Activated CD4-positive, alpha-beta memory T cell treated with anti-CD3 and anti-CD28 coated beads, Interleukin-2, amount 10 ng/mL, durations not matched to agents 7 days and 5 days (primary cell): ENCODE measurements at regions of chr19 and their contacts with region 1.

Region 1: DNA sequence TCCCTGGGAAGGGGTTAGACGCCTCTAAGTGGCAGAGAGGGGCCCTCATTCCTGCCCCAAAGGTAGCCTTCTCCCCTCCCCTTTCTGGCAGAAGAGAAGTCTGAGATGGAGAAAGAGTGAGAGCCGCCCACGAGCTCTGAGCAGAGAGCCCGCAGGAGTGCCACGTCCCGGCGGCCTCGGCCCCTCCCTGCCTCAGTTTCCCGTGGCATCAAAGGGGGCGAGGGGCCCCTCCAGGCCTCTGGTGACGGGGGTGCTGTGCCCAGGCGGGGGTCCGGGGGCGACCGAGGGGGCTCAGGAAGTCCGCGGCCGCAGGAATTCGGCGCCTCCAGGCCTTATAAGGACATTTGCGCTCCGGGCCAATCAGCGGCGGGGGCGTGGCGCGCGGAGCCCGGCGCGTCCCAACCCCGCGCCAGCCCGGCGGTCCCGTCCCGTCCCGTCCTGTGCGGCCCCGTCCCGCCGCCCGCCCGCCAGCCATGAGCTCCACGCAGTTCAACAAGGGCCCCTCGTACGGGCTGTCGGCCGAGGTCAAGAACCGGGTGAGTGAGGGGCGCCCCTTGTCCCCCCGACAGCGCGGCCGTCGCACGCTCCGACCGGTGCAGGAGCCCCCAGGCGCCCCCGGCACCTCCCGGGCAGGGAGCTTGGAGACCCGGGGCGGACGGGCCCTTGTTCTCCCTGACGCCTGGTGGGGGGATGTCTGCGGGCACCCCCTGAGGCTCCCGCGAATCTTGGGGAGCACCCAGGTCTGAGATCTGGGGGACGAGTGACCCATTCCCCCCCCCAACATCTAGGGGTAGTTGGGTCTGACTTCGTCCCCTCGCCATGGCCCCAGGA is at the start of gene CNN2:
- DNase-seq: peak; percentile 78
- H3K4me3 Mint-ChIP-seq: peak within 1 kb of the TSS; percentile 97
- H3K27ac Mint-ChIP-seq: peak within 1 kb of the TSS; percentile 95
- H3K4me1 Mint-ChIP-seq: peaks cover 33% of the 10 kb centered on the region
- H3K27me3 Mint-ChIP-seq: no peaks in the 10 kb centered on the region
- total RNA-seq, gene CNN2: 513 to 519 TPM

Region 2: DNA sequence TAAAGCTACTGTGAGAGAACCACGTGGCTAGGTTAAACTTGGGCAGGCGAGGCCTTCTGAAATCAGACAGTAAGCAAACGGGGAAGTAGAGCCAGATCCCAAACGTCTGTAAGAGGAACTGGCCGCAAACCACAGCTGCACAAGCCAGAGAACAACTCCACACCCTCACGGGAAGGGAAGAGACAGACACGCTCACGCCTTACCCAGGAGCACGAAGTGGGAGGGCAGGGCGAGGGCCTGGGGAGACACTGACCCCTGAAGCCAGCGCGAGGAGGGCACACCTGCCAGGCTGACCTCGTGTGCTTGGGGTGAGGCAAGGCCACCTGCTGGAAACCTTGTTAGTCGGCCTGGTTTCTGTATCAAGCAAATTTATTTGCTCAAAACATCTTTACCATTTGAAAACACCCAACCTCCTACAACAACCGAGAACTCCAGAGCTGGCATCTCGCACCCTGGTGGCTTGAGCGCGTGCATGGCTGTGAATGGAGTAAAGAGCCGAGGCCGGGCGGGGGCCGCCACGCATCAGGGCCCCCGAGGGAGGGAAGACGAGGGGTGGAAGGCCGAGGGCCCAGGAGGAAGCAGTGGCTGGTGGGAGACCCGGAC is 61.5 kb after region 1 on chr19:
- CTCF ChIA-PET with region 1: no interaction called
- POLR2A ChIA-PET with region 1: interaction called, 50 read pairs
- DNase-seq: peak; percentile 54
- H3K4me3 Mint-ChIP-seq: peak overlapping the region; percentile 20
- H3K27ac Mint-ChIP-seq: peak overlapping the region; percentile 82
- H3K4me1 Mint-ChIP-seq: peaks cover 45% of the 10 kb centered on the region
- H3K27me3 Mint-ChIP-seq: no peaks in the 10 kb centered on the region